CD4-positive, alpha-beta memory T cell (primary cell): ENCODE measurements at regions of chr7 and their contacts with region 1.

Region 1: DNA sequence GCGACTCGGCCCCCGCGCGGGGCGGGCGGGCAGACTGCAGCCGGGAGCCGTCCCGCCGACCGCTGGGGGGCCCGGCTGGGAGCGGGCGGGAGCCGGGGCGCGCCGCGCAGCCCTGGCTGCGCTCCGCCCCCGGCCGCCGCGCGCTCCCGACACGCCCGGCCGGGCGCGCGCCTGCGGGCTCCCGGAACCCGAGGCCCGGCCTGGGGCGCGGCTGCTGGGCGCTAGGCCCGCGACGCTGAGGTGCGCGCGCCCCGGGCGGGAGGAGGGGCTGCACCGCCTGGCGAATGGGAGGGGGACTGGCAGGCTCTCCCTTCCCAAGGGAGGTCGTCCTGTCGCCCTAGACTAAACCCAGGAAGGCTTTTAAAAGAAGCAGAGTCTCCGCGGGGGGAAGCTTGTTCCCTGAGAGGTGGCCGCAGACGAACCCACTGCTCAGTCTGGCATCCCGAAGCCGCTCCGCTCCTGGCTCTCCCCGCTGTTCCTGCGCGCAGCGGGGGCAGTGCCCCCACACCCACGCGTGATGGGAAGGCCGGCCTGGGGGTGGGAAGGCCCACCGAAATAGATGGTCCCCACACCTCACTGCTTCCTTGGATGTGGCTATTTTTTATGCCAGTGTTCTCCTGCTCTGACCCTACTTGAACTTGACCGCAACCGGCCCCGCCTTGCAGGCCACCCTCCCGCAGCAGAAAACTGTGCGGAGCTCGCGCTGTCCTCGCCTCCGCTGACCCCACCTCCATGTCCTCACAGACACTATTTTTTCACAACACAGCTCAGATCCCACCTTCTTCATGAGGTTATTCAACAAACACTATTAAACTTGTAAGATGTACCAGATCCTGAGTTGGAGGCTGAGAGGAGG is at the start of gene VOPP1:
- DNase-seq: peak in 4 of 5 donors; percentile 62 to 78 (median 69)
- H3K4me3 ChIP-seq: peak within 1 kb of the TSS; percentile 63 to 80
- H3K4me3 Mint-ChIP-seq: peak within 1 kb of the TSS; percentile 93 to 98 (median 96)
- H3K27ac ChIP-seq: peak within 1 kb of the TSS; percentile 82
- H3K27ac Mint-ChIP-seq: peak within 1 kb of the TSS; percentile 93 to 99 (median 97)
- H3K4me1 ChIP-seq: peaks cover 55% of the 10 kb centered on the region
- H3K4me1 Mint-ChIP-seq: peaks cover 44 to 72% (median 56%) of the 10 kb centered on the region in 4 donors
- H3K27me3 ChIP-seq: no peaks in the 10 kb centered on the region
- H3K27me3 Mint-ChIP-seq: no peaks in the 10 kb centered on the region
- total RNA-seq, gene VOPP1: 91.0 to 98.7 TPM

Region 2: GRCh38 chr7:55469271-55469681 is 103.3 kb before region 1 on chr7:
- CTCF ChIA-PET with region 1: interaction called, 29 read pairs
- POLR2A ChIA-PET with region 1: interaction called, 51 read pairs
- intact Hi-C with region 1: loop called (anchors 2 kb)
- DNase-seq: peak; percentile 60 to 82 (median 78)
- H3K4me3 ChIP-seq: no peak overlapping the region
- H3K4me3 Mint-ChIP-seq: peak overlapping the region in 7 of 8 donors; percentile 28 to 81 (median 72)
- H3K27ac ChIP-seq: peak overlapping the region; percentile 42
- H3K27ac Mint-ChIP-seq: peak overlapping the region; percentile 88 to 95 (median 94)
- H3K4me1 ChIP-seq: peaks cover 91% of the 10 kb centered on the region
- H3K4me1 Mint-ChIP-seq: peaks cover 49 to 84% (median 74%) of the 10 kb centered on the region in 4 donors
- H3K27me3 ChIP-seq: no peaks in the 10 kb centered on the region
- H3K27me3 Mint-ChIP-seq: no peaks in the 10 kb centered on the region

Region 3: GRCh38 chr7:55490099-55490498 is 82.5 kb before region 1 on chr7:
- CTCF ChIA-PET with region 1: no interaction called
- POLR2A ChIA-PET with region 1: interaction called, 11 read pairs
- intact Hi-C with region 1: no loop called
- DNase-seq: no peak
- H3K4me3 ChIP-seq: no peak overlapping the region
- H3K4me3 Mint-ChIP-seq: no peak overlapping the region
- H3K27ac ChIP-seq: no peak overlapping the region
- H3K27ac Mint-ChIP-seq: peak overlapping the region in 2 of 7 donors; percentile 12 to 13
- H3K4me1 ChIP-seq: peaks cover 33% of the 10 kb centered on the region
- H3K4me1 Mint-ChIP-seq: peaks cover 31 to 76% (median 47%) of the 10 kb centered on the region in 4 donors
- H3K27me3 ChIP-seq: no peaks in the 10 kb centered on the region
- H3K27me3 Mint-ChIP-seq: no peaks in the 10 kb centered on the region

Region 4: DNA sequence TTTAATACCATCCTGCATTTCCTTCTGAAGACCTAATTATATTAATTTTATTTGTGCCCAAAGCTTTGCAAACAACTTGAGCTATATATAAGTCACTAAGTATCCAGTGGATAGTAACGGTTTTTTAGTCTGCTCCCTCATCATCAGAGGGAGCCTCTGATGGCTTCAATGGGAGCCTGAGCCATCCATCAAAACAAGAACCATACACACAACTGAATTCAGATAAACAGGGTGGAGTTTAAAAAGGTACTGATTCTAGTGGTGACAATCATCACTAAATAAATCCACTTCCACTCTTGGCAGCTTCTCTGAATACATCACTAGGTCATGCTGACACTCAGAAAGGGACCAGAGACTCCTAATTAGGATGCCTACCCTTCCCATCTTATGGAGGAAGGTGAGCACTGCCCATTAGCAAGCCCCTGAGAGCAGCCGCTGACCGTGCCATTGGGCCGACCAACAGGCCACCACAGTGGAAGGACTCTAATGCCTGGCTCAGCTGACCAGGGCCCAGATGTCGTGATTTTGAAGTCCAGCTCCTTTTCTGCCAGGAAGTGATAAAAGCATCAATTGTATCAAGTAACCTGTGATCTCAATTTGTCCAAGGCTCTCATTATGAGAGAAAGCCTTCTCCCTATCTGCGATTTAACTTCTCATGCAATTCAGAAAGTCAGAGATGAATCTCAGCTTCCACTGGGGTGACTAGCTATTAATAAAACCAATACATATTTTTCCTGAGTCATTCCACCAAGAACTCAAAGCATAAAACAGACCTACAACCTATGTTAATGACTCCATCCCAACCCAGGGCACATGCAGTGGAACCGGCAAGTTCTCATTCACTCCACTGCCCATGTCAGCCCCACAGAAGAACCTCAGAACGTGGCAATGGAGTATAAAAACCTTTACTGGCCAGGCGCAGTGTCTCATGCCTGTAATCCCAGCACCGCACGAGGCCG is 13.4 kb before region 1 on chr7:
- CTCF ChIA-PET with region 1: interaction called, 5 read pairs
- POLR2A ChIA-PET with region 1: interaction called, 15 read pairs
- intact Hi-C with region 1: loop called (anchors 1 kb)
- DNase-seq: no peak
- H3K4me3 ChIP-seq: no peak overlapping the region
- H3K4me3 Mint-ChIP-seq: peak overlapping the region in 7 of 8 donors; percentile 21 to 56 (median 35)
- H3K27ac ChIP-seq: no peak overlapping the region
- H3K27ac Mint-ChIP-seq: peak overlapping the region; percentile 12 to 75 (median 48)
- H3K4me1 ChIP-seq: peaks cover 98% of the 10 kb centered on the region
- H3K4me1 Mint-ChIP-seq: peaks cover 76 to 95% (median 84%) of the 10 kb centered on the region in 4 donors
- H3K27me3 ChIP-seq: no peaks in the 10 kb centered on the region
- H3K27me3 Mint-ChIP-seq: no peaks in the 10 kb centered on the region

Region 5: DNA sequence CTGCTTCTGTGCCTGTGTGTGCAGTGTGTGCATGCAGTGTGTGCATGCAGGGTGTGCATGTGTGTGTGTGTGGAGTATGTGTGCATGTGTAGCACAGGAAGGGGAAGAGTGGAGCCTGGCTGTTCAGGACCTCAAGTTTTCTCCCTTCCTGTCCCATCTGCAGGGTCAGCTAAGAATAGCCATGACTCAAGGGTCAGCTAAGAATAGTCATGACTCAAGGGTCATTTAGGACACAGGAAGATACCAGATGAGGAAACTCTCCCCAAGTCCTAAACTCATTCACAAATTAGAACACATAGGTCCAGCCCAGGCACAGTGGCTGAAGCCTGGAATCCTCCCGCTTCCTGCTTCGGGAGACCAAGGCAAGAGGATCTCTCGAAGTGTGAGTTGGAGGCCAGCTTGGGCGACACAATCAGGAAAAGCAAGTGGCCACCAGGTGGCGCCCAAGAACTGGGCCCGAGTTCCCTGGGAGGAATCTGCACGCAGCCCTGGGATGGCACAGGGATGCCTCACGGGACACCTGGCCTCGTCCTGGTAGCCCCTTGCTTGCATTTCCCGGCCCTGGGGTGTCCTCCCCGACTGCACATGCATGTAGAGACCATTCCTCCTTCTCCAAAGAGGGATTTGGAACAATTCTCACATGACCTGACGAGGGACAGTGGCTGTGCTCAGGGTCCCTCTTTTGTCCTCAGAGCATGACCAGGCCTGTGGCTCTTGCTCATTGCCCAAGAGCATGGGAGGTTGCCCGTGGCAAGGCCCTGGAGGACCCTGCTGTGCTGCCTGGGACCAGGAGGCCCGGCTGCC is 21.1 kb after region 1 on chr7:
- CTCF ChIA-PET with region 1: interaction called, 22 read pairs
- POLR2A ChIA-PET with region 1: interaction called, 10 read pairs
- intact Hi-C with region 1: loop called (anchors 2 kb)
- DNase-seq: peak; percentile 50 to 67 (median 55)
- H3K4me3 ChIP-seq: no peak overlapping the region
- H3K4me3 Mint-ChIP-seq: no peak overlapping the region
- H3K27ac ChIP-seq: no peak overlapping the region
- H3K27ac Mint-ChIP-seq: no peak overlapping the region
- H3K4me1 ChIP-seq: peaks cover 17% of the 10 kb centered on the region
- H3K4me1 Mint-ChIP-seq: peaks cover 7 to 24% (median 15%) of the 10 kb centered on the region in 4 donors
- H3K27me3 ChIP-seq: no peaks in the 10 kb centered on the region
- H3K27me3 Mint-ChIP-seq: peaks cover 4 to 6% of the 10 kb centered on the region in 2 donors

Region 6: GRCh38 chr7:55939514-55940123 is 367.0 kb after region 1 on chr7:
- CTCF ChIA-PET with region 1: no interaction called
- POLR2A ChIA-PET with region 1: no interaction called
- intact Hi-C with region 1: no loop called
- DNase-seq: no peak
- H3K4me3 ChIP-seq: no peak overlapping the region
- H3K4me3 Mint-ChIP-seq: no peak overlapping the region
- H3K27ac ChIP-seq: no peak overlapping the region
- H3K27ac Mint-ChIP-seq: no peak overlapping the region
- H3K4me1 ChIP-seq: no peaks in the 10 kb centered on the region
- H3K4me1 Mint-ChIP-seq: no peaks in the 10 kb centered on the region
- H3K27me3 ChIP-seq: no peaks in the 10 kb centered on the region
- H3K27me3 Mint-ChIP-seq: peaks cover 0 to 1% of the 10 kb centered on the region in 2 donors

Region 7: GRCh38 chr7:56051339-56052191 is 479.0 kb after region 1 on chr7 and contains the starts of genes CCT6A and PSPH:
- CTCF ChIA-PET with region 1: no interaction called
- POLR2A ChIA-PET with region 1: no interaction called
- intact Hi-C with region 1: loop called (anchors 5 kb)
- DNase-seq: peak; percentile 82 to 89 (median 85)
- H3K4me3 ChIP-seq: peak within 1 kb of the TSS; percentile 10 to 95
- H3K4me3 Mint-ChIP-seq: peak within 1 kb of the TSS; percentile 90 to 99 (median 96)
- H3K27ac ChIP-seq: peak within 1 kb of the TSS; percentile 82
- H3K27ac Mint-ChIP-seq: peak within 1 kb of the TSS; percentile 87 to 98 (median 96)
- H3K4me1 ChIP-seq: peaks cover 41% of the 10 kb centered on the region
- H3K4me1 Mint-ChIP-seq: peaks cover 18 to 44% (median 28%) of the 10 kb centered on the region in 4 donors
- H3K27me3 ChIP-seq: no peaks in the 10 kb centered on the region
- H3K27me3 Mint-ChIP-seq: no peaks in the 10 kb centered on the region
- total RNA-seq, gene CCT6A: 72.9 to 78.2 TPM
- total RNA-seq, gene PSPH: 4.3 to 8.0 TPM